Naive thymus-derived CD4-positive, alpha-beta T cell (primary cell): ENCODE measurements at regions of chr1 and their contacts with region 1.

Region 1: DNA sequence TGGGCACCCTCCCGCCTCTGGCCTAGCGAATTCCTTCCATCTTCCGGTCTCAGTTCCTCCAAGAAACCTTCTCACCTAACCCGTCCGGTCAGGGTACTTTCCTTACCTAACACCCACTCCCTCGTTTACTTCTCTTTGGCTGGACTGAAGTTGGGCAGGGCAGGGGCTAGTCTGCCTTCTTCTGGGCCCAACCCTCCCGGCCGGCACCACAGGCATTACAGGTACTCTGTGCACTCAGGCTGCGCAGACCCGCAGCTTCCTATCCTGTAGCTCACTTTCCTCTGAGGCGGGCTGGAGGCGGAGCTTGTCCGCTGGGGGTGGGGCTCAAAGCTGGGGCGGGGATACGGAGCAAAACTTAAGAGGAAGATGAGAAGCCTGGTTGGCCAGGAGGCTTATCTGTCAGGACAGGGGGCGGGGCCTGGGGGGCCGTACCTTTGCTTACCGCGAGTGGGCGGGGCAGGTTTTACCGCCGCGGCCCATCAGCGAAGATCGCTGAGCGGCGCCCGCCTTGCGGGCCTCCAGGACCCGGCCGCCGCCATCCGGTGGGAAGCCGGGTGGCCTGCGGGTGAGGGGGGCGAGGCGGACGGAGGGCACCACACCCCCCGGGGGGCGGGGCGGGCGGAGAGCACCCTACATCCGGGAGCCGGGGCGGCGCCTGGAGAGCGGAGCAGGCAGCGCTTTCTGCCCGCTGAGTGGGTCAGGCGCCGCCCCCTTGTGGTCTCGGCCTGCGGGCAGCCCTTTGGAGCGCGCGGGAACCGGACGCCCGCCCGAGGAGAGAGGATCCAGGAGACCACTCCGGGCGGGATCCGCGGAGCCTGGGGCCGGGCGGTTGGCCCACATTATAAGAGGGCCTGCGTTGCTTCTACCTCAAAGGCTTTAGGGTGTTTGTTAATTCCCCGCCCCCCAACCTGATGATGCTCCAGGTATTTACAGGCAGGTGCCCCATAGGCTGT is 31.9 kb downstream of the ZNF648 start:
- DNase-seq: peak; percentile 95 to 98 (median 98)
- ATAC-seq: peak; percentile 97
- H3K4me3 ChIP-seq: peak overlapping the region; percentile 72
- H3K4me3 Mint-ChIP-seq: peak overlapping the region; percentile 90 to 100 (median 96)
- H3K27ac ChIP-seq: peak overlapping the region; percentile 87
- H3K27ac Mint-ChIP-seq: peak overlapping the region; percentile 94 to 100 (median 99)
- H3K4me1 ChIP-seq: peaks cover 9 to 14% of the 10 kb centered on the region in 2 donors
- H3K4me1 Mint-ChIP-seq: peaks cover 12 to 21% (median 18%) of the 10 kb centered on the region in 7 donors
- H3K27me3 ChIP-seq: no peaks in the 10 kb centered on the region
- H3K27me3 Mint-ChIP-seq: peaks cover 0 to 6% (median 0%) of the 10 kb centered on the region in 5 donors

Region 2: GRCh38 chr1:180154325-180155181 is 1875.1 kb before region 1 on chr1 and contains the start of gene QSOX1:
- CTCF ChIA-PET with region 1: no interaction called
- POLR2A ChIA-PET with region 1: no interaction called
- intact Hi-C with region 1: loop called (anchors 10 kb)
- DNase-seq: peak; percentile 81 to 89 (median 86)
- ATAC-seq: peak; percentile 97
- H3K4me3 ChIP-seq: peak within 1 kb of the TSS; percentile 94
- H3K4me3 Mint-ChIP-seq: peak within 1 kb of the TSS; percentile 80 to 99 (median 91)
- H3K27ac ChIP-seq: peak within 1 kb of the TSS; percentile 78
- H3K27ac Mint-ChIP-seq: peak within 1 kb of the TSS; percentile 81 to 95 (median 86)
- H3K4me1 ChIP-seq: peaks cover 7 to 20% of the 10 kb centered on the region in 2 donors
- H3K4me1 Mint-ChIP-seq: peaks cover 24 to 45% (median 37%) of the 10 kb centered on the region in 7 donors
- H3K27me3 ChIP-seq: no peaks in the 10 kb centered on the region
- H3K27me3 Mint-ChIP-seq: no peaks in the 10 kb centered on the region
- total RNA-seq, gene QSOX1: 22.1 to 55.6 (median 25.6) TPM

Region 3: DNA sequence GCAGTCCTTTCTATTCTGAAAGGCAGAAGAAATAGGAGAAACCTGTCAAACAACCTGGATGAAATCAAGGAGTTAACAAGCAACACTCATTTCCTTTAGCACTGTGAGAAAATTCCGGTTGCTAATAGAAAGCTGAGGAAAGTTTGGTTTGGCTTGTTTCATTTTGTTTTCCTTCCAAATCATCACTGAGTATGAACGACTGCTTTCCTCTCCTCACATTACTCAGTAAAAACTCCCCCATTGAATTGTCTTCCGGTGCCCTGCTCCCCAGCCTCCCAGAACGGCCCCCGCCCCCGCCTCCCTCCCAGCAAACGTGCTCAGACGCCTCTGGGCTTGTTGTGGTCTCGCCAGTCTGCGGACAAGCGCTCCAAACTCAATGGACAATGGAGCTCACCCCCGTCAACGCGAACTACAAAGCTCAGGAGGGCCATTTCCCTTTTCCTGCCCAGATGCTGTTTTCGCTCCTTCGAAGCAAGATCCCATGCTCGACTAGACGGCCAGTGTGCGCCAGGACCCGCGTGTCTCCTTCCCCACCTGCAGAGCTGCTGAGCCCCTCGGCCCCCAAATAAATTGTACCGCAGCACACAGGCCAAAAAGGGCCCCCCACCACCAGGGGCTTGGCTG is 1007.7 kb before region 1 on chr1:
- CTCF ChIA-PET with region 1: no interaction called
- POLR2A ChIA-PET with region 1: no interaction called
- intact Hi-C with region 1: loop called in 1 of 2 experiments (anchors 2 kb)
- DNase-seq: peak; percentile 12 to 67 (median 33)
- ATAC-seq: peak; percentile 21
- H3K4me3 ChIP-seq: peak overlapping the region; percentile 84
- H3K4me3 Mint-ChIP-seq: peak overlapping the region; percentile 92 to 98 (median 94)
- H3K27ac ChIP-seq: peak overlapping the region; percentile 84
- H3K27ac Mint-ChIP-seq: peak overlapping the region; percentile 93 to 100 (median 97)
- H3K4me1 ChIP-seq: peaks cover 21 to 22% of the 10 kb centered on the region in 2 donors
- H3K4me1 Mint-ChIP-seq: peaks cover 17 to 59% (median 48%) of the 10 kb centered on the region in 7 donors
- H3K27me3 ChIP-seq: no peaks in the 10 kb centered on the region
- H3K27me3 Mint-ChIP-seq: peaks cover 0 to 25% (median 0%) of the 10 kb centered on the region in 5 donors

Region 4: DNA sequence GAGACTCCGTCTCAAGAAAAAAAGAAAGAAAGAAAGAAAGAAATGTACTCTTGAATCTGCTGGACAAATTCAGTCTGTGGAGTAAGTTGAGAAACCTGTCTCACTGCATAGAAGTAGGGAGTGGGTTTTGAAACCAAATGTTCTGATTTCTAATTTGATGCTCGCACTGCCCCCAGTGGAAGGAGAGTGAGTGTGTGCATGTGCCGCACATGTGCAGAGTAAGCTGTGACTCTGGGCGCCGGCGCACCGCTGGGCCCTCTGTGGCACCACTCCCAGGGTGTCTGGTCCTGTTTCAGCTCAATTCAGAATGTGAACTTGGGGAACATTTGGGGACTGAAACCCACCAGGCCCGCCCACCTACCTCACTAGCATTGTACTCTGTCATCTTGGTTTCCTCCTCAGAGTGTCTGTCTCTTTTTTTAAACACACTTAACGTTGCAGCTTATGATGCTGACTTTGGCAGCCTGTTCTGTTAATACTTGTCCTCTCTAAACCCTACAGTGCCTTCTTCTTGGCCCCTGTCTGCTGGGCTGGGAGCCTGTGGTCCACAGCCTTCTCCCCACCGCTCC is 441.7 kb before region 1 on chr1:
- CTCF ChIA-PET with region 1: no interaction called
- POLR2A ChIA-PET with region 1: no interaction called
- intact Hi-C with region 1: no loop called
- DNase-seq: no peak
- ATAC-seq: peak; percentile 10
- H3K4me3 ChIP-seq: no peak overlapping the region
- H3K4me3 Mint-ChIP-seq: no peak overlapping the region
- H3K27ac ChIP-seq: no peak overlapping the region
- H3K27ac Mint-ChIP-seq: no peak overlapping the region
- H3K4me1 ChIP-seq: no peaks in the 10 kb centered on the region
- H3K4me1 Mint-ChIP-seq: no peaks in the 10 kb centered on the region
- H3K27me3 ChIP-seq: no peaks in the 10 kb centered on the region
- H3K27me3 Mint-ChIP-seq: peaks cover 5 to 15% (median 12%) of the 10 kb centered on the region in 5 donors

Region 5: DNA sequence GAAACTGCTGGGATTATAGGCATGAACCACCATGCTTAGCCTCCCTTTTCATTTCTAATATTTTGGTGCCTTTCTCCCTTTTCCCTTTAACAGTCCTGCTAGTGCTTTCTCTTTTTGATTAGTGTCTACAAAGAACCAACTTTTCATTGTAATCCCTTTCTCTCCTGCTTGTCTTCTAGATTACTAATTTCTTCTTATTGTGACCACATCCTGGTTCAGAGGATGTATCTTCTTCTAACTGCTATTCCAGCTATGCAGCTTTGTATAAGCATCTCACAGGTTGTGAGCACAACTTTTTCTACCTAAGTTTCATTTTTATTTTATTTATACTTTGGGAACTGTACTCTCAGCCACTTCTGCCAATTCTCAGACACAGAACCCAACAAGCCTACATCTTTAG is 17.1 kb after region 1 on chr1:
- CTCF ChIA-PET with region 1: no interaction called
- POLR2A ChIA-PET with region 1: no interaction called
- intact Hi-C with region 1: loop called in 1 of 2 experiments (anchors 1 kb)
- DNase-seq: peak in 4 of 9 donors; percentile 10 to 37 (median 18)
- ATAC-seq: no peak
- H3K4me3 ChIP-seq: no peak overlapping the region
- H3K4me3 Mint-ChIP-seq: peak overlapping the region in 9 of 10 donors; percentile 4 to 83 (median 52)
- H3K27ac ChIP-seq: peak overlapping the region; percentile 6
- H3K27ac Mint-ChIP-seq: peak overlapping the region; percentile 29 to 89 (median 83)
- H3K4me1 ChIP-seq: peaks cover 0 to 17% of the 10 kb centered on the region in 2 donors
- H3K4me1 Mint-ChIP-seq: peaks cover 4 to 39% (median 23%) of the 10 kb centered on the region in 7 donors
- H3K27me3 ChIP-seq: no peaks in the 10 kb centered on the region
- H3K27me3 Mint-ChIP-seq: no peaks in the 10 kb centered on the region

Region 6: DNA sequence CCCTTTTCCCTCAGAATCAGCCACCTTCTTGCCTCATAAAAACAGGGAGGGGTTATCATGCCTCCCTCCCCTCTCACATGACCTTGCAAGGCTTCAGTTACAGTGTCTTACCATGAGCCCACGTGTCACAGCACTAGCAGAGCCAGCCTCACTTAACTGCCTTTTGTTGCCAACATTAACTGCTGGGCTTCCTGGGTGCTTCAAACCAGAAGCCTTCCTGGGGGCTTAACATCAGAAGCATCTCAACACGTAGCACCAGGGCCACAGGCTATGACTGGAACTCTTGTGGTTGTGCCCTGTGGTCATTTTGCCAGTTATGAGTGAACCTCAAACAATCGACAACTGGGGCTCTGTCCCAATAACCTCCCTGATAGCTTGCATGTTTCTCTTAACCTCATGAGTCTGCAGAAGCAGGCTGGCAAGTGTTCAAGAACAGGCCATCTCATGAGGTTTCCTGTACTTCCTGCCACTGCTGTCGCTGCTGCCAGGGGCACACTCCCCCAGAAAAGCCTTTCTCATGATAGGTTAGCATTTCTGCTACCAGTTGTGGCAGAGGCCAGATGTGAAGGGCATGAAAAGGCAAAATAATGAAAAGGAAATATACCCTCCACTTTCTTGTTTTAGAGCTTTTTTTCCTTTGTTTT is 229.7 kb after region 1 on chr1:
- CTCF ChIA-PET with region 1: no interaction called
- POLR2A ChIA-PET with region 1: no interaction called
- intact Hi-C with region 1: loop called in 1 of 2 experiments (anchors 1 kb)
- DNase-seq: peak; percentile 21 to 79 (median 65)
- ATAC-seq: peak; percentile 90
- H3K4me3 ChIP-seq: peak overlapping the region; percentile 2
- H3K4me3 Mint-ChIP-seq: peak overlapping the region; percentile 28 to 82 (median 75)
- H3K27ac ChIP-seq: peak overlapping the region; percentile 72
- H3K27ac Mint-ChIP-seq: peak overlapping the region; percentile 83 to 97 (median 91)
- H3K4me1 ChIP-seq: peaks cover 11 to 20% of the 10 kb centered on the region in 2 donors
- H3K4me1 Mint-ChIP-seq: peaks cover 23 to 50% (median 43%) of the 10 kb centered on the region in 7 donors
- H3K27me3 ChIP-seq: no peaks in the 10 kb centered on the region
- H3K27me3 Mint-ChIP-seq: no peaks in the 10 kb centered on the region

Region 7: GRCh38 chr1:182588500-182589452 is 559.1 kb after region 1 on chr1 and contains the start of gene RNASEL:
- CTCF ChIA-PET with region 1: no interaction called
- POLR2A ChIA-PET with region 1: no interaction called
- intact Hi-C with region 1: loop called in 1 of 2 experiments (anchors 1 kb)
- DNase-seq: peak; percentile 24 to 72 (median 65)
- ATAC-seq: peak; percentile 89
- H3K4me3 ChIP-seq: peak within 1 kb of the TSS; percentile 92
- H3K4me3 Mint-ChIP-seq: peak within 1 kb of the TSS; percentile 93 to 99 (median 98)
- H3K27ac ChIP-seq: peak within 1 kb of the TSS; percentile 97
- H3K27ac Mint-ChIP-seq: peak within 1 kb of the TSS; percentile 97 to 100 (median 99)
- H3K4me1 ChIP-seq: peaks cover 23 to 27% of the 10 kb centered on the region in 2 donors
- H3K4me1 Mint-ChIP-seq: peaks cover 31 to 60% (median 51%) of the 10 kb centered on the region in 7 donors
- H3K27me3 ChIP-seq: no peaks in the 10 kb centered on the region
- H3K27me3 Mint-ChIP-seq: peaks cover 0 to 9% (median 0%) of the 10 kb centered on the region in 5 donors
- total RNA-seq, gene RNASEL: 5.7 to 34.9 (median 12.1) TPM

Region 8: GRCh38 chr1:182789138-182790076 is 759.8 kb after region 1 on chr1 and contains the start of gene NPL:
- CTCF ChIA-PET with region 1: no interaction called
- POLR2A ChIA-PET with region 1: no interaction called
- intact Hi-C with region 1: loop called (anchors 1 kb)
- DNase-seq: peak; percentile 78 to 88 (median 86)
- ATAC-seq: peak; percentile 97
- H3K4me3 ChIP-seq: peak within 1 kb of the TSS; percentile 94
- H3K4me3 Mint-ChIP-seq: peak within 1 kb of the TSS; percentile 88 to 96 (median 94)
- H3K27ac ChIP-seq: peak within 1 kb of the TSS; percentile 68
- H3K27ac Mint-ChIP-seq: peak within 1 kb of the TSS; percentile 45 to 94 (median 87)
- H3K4me1 ChIP-seq: peaks cover 8 to 13% of the 10 kb centered on the region in 2 donors
- H3K4me1 Mint-ChIP-seq: peaks cover 8 to 18% (median 15%) of the 10 kb centered on the region in 7 donors
- H3K27me3 ChIP-seq: no peaks in the 10 kb centered on the region
- H3K27me3 Mint-ChIP-seq: peaks cover 0 to 38% (median 0%) of the 10 kb centered on the region in 5 donors
- total RNA-seq, gene NPL: 3.0 to 20.8 (median 9.9) TPM